ENCODE measurements at regions of chr11 and their contacts with region 1.

Region 1: GRCh38 chr11:111446404-111447111 is 65.6 kb downstream of the BTG4 start:
- H3K4me3 ChIP-seq: no peak overlapping the region
- H3K27ac ChIP-seq: no peak overlapping the region
- H3K4me1 ChIP-seq: no peaks in the 10 kb centered on the region
- CTCF ChIP-seq: peak; percentile 81

Region 2: GRCh38 chr11:111429066-111429506 is 17.5 kb before region 1 on chr11:
- CTCF ChIA-PET with region 1: interaction called, 31 read pairs
- POLR2A ChIA-PET with region 1: no interaction called
- H3K4me3 ChIP-seq: no peak overlapping the region
- H3K27ac ChIP-seq: no peak overlapping the region
- H3K4me1 ChIP-seq: peaks cover 2% of the 10 kb centered on the region; the same call in 1 of the 2 replicates
- CTCF ChIP-seq: no peak